Body of pancreas (tissue), 4 donors: ENCODE measurements at regions of chr6 and their contacts with region 1.

Region 1: DNA sequence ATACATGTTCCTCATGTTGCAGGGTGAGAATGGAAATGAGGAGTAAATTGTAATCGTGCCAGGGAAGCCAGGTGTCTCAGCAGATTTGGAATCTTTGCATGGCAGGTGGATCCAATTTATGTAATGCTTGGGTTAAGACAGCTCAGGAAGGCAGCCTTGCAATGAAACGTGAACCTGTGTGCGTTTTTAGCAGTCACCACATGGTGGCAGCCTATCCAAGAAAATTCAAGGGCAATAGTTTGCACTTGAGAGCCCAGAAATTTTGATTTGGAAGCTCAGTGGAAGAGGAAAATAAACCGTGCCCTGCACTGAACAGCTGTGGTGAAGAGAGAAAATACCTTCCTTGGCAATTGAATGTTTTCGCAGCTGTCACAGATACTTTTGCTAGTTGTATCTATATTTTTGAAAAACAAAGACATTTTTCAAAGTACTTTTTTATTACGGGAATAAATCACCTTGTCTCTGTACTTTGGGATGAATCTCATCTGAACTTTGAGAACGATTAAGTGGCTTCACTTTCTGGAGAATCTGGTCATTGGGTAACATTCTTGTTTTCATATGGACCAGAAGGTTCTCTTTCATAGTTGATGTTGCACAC is 26.5 kb downstream of the MTHFD1L start:
- DNase-seq: peak; percentile 70 to 78 (median 74)
- ATAC-seq: peak; percentile 81
- H3K4me3 ChIP-seq: no peak overlapping the region
- H3K27ac ChIP-seq: no peak overlapping the region
- H3K4me1 ChIP-seq: no peaks in the 10 kb centered on the region
- H3K27me3 ChIP-seq: no peaks in the 10 kb centered on the region
- CTCF ChIP-seq: peak; percentile 58 to 89 (median 82)
- POLR2A ChIP-seq: no peak

Region 2: DNA sequence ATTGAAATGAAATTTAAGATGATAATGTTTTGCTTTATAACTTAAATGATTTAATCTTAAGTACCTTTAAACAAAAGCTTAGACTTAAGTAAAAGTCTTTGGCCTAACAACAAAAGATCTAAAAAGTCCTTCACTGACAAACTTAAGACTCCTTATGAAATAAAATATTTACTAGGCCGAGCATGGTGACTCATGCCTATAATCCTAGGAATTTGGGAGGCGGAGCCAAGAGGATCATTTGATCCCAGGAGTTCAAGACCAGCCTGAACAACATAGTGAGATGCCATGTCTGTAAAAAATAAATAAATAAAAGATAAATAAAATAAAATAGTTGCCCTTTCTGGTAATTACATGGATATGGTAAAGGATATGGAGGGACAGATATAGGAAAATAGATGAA is 1255.9 kb before region 1 on chr6:
- intact Hi-C with region 1: no loop called
- DNase-seq: no peak
- ATAC-seq: no peak
- H3K4me3 ChIP-seq: no peak overlapping the region
- H3K27ac ChIP-seq: no peak overlapping the region
- H3K4me1 ChIP-seq: peaks cover 4% of the 10 kb centered on the region
- H3K27me3 ChIP-seq: no peaks in the 10 kb centered on the region
- CTCF ChIP-seq: no peak
- POLR2A ChIP-seq: no peak

Region 3: DNA sequence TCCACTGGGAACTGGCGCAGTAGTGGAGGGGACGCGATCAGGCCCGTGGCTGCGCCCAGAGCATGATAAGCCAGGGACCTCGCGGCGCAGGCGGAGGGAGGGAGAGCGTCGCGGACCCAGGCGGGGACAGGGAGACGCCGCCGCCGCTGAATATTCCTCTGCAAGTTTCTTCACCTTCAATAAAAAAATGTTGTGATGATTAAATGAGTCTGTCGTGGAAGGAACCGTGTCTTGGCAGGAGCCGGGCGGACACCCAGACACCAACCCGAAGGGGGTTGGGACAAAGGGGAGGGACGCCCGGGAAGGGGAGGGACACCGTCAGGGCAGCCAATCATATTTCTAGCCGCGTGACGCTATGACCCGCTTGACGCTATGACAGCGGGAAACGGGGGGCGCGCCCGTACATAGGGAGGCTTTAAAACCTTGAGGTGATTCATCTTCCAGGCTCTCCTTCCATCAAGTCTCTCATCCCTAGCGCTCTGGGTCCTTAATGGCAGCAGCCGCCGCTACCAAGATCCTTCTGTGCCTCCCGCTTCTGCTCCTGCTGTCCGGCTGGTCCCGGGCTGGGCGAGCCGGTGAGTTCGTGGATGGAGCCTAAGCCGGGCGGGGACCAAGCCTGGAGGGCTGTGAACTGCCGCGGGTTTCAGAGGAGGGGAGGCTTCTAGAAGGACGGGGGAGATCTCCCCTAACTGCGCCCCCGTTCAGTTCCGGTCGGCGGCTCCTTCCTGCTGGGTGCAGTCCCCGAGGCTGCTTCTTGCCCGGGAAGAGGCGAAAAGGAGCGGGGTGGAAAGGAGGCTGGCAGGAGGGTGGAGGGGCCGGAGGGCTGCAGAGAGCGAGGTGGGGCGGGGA is 950.2 kb before region 1 on chr6 and contains the start of gene ULBP2:
- intact Hi-C with region 1: no loop called
- DNase-seq: peak; percentile 67 to 82 (median 76)
- ATAC-seq: peak; percentile 86
- H3K4me3 ChIP-seq: peak within 1 kb of the TSS in 1 of 2 donors; percentile 29
- H3K27ac ChIP-seq: no peak within 1 kb of the TSS
- H3K4me1 ChIP-seq: peaks cover 23% of the 10 kb centered on the region
- H3K27me3 ChIP-seq: peaks cover 0 to 26% of the 10 kb centered on the region in 2 donors
- CTCF ChIP-seq: no peak
- POLR2A ChIP-seq: peak in 1 of 3 donors; percentile 27
- total RNA-seq, gene ULBP2: 0.26 TPM in 1 of 2 donors, not detected in the other

Region 4: GRCh38 chr6:150711584-150712504 is 180.1 kb before region 1 on chr6:
- intact Hi-C with region 1: no loop called
- DNase-seq: peak in 2 of 4 donors; percentile 28 to 33
- ATAC-seq: no peak
- H3K4me3 ChIP-seq: no peak overlapping the region
- H3K27ac ChIP-seq: no peak overlapping the region
- H3K4me1 ChIP-seq: peaks cover 20% of the 10 kb centered on the region
- H3K27me3 ChIP-seq: no peaks in the 10 kb centered on the region
- CTCF ChIP-seq: no peak
- POLR2A ChIP-seq: no peak

Region 5: DNA sequence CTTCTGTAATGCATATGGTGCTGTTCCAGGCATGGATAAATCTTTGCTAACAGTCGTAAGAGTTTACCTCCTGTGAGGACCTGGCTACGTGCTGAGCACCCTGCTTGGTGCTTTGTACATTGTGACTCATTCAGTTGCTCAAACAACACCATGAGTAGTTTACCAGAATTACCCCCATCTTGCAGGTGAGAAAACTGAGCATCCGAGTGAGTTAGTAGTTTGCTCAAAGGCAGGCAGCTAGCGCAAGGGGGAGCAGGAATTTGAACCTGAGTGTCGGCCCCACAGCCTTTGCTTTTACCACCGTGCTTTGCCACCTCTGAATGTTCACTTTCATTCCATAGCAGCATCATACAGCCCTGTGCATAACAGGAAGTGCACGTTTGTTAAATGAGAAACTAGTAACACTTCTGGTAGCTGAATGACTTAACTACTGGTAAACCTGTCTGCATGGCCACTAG is 95.4 kb after region 1 on chr6:
- intact Hi-C with region 1: no loop called
- DNase-seq: no peak
- ATAC-seq: no peak
- H3K4me3 ChIP-seq: no peak overlapping the region
- H3K27ac ChIP-seq: no peak overlapping the region
- H3K4me1 ChIP-seq: no peaks in the 10 kb centered on the region
- H3K27me3 ChIP-seq: no peaks in the 10 kb centered on the region
- CTCF ChIP-seq: no peak
- POLR2A ChIP-seq: no peak

Region 6: GRCh38 chr6:151330134-151330696 is 438.2 kb after region 1 on chr6:
- intact Hi-C with region 1: loop called (anchors 5 kb)
- DNase-seq: no peak
- ATAC-seq: no peak
- H3K4me3 ChIP-seq: no peak overlapping the region
- H3K27ac ChIP-seq: no peak overlapping the region
- H3K4me1 ChIP-seq: peaks cover 10% of the 10 kb centered on the region
- H3K27me3 ChIP-seq: no peaks in the 10 kb centered on the region
- CTCF ChIP-seq: no peak
- POLR2A ChIP-seq: no peak